Ascending aorta (tissue), 2 donors: ENCODE measurements at regions of chr11 and their contacts with region 1.

Region 1: GRCh38 chr11:62556108-62556871 is 9.7 kb upstream of the AHNAK start:
- DNase-seq: peak; percentile 85 to 97
- H3K4me3 ChIP-seq: peak overlapping the region; percentile 36 to 42
- H3K27ac ChIP-seq: peak overlapping the region; percentile 94 to 96
- H3K4me1 ChIP-seq: peaks cover 43 to 69% of the 10 kb centered on the region in 2 donors
- H3K27me3 ChIP-seq: no peaks in the 10 kb centered on the region
- CTCF ChIP-seq: no peak

Region 2: GRCh38 chr11:62394825-62395538 is 161.3 kb before region 1 on chr11:
- intact Hi-C with region 1: loop called (anchors 1 kb)
- DNase-seq: peak; percentile 24 to 89
- H3K4me3 ChIP-seq: peak overlapping the region; percentile 44 to 58
- H3K27ac ChIP-seq: peak overlapping the region; percentile 56 to 58
- H3K4me1 ChIP-seq: peaks cover 20 to 27% of the 10 kb centered on the region in 2 donors
- H3K27me3 ChIP-seq: no peaks in the 10 kb centered on the region
- CTCF ChIP-seq: peak; percentile 67 to 77 (median 69)